Activated naive CD4-positive, alpha-beta T cell treated with anti-CD3 and anti-CD28 coated beads for 36 hours (primary cell): ENCODE measurements at regions of chr3 and their contacts with region 1.

Region 1: GRCh38 chr3:32570421-32571191 is at the start of gene DYNC1LI1:
- DNase-seq: peak; percentile 94
- H3K4me3 Mint-ChIP-seq: peak within 1 kb of the TSS; percentile 88
- H3K27ac Mint-ChIP-seq: peak within 1 kb of the TSS; percentile 88
- H3K4me1 Mint-ChIP-seq: peaks cover 19% of the 10 kb centered on the region
- H3K27me3 Mint-ChIP-seq: no peaks in the 10 kb centered on the region
- total RNA-seq, gene DYNC1LI1: 29.8 to 33.1 TPM

Region 2: DNA sequence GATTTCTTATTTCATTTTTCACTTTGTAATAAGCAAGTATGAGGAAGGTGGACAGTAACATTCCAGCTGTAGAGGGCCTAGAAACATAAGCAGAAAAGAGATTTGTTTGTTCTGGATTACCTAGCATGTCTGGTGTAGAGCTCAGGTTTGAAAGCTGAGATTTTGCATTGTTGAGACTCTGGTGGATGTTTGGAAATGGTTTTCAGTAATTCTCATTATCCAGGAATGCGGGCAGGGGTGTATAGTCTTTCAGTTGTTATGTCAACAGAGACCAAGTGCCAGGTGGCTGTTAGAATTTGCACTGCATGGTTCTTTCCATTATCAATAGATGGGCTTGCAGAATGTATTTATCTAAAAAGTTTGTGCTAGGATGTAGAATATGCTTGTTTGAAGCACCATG is 453.3 kb before region 1 on chr3:
- CTCF ChIA-PET with region 1: no interaction called
- intact Hi-C with region 1: loop called (anchors 2 kb)
- DNase-seq: no peak
- H3K4me3 Mint-ChIP-seq: no peak overlapping the region
- H3K27ac Mint-ChIP-seq: no peak overlapping the region
- H3K4me1 Mint-ChIP-seq: peaks cover 61% of the 10 kb centered on the region
- H3K27me3 Mint-ChIP-seq: no peaks in the 10 kb centered on the region

Region 3: DNA sequence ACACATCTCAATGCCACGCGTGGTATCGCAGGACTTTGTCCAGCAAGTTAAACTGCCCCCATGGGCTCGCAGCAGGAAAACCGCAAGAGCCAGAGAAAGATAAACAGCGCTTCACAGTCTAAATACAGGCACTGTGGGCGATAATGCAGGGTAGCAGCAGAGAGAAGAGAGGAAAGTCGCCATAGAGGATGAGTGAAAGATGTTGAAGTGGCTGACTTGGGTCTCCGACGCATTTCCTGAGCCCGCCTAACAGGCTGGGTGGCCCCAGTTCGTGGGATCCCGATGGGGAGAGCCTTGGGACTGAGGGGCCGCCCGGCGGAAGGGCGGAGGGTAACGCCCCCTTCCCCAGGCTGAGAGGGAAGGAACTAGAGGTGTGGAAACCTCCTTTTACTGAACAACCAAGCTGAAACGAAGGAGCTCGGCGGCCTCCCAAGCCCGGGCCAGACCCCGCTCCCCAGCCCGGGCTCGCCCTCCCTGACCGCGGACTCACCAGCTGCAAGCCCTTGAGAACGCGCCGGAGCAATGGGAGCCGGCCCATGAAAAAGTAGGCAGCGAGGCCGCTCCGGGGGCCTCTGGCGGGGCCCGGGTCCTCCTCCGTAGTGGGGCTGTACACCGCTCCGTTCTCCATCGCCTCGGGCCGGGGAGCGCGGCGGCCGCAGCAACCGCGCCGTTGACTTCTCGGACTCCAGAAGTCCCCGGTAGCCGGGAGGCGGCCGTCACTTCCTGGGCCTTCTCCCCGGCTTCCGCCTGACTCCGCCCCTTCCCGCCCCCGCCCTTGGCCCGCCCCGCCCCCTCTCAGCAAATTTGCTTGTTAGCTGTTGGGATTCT is 68.3 kb before region 1 on chr3 and contains the start of gene CMTM6:
- CTCF ChIA-PET with region 1: interaction called, 3 read pairs
- intact Hi-C with region 1: loop called (anchors 1 kb)
- DNase-seq: peak; percentile 81
- H3K4me3 Mint-ChIP-seq: peak within 1 kb of the TSS; percentile 97
- H3K27ac Mint-ChIP-seq: peak within 1 kb of the TSS; percentile 89
- H3K4me1 Mint-ChIP-seq: peaks cover 27% of the 10 kb centered on the region
- H3K27me3 Mint-ChIP-seq: no peaks in the 10 kb centered on the region
- total RNA-seq, gene CMTM6: 43.7 to 44.3 TPM